Activated naive CD4-positive, alpha-beta T cell treated with anti-CD3 and anti-CD28 coated beads for 36 hours (primary cell): ENCODE measurements at regions of chr22 and their contacts with region 1.

Region 1: GRCh38 chr22:36065775-36066559 is 37.3 kb upstream of the RBFOX2 start:
- DNase-seq: peak; percentile 80
- H3K4me3 Mint-ChIP-seq: peak overlapping the region; percentile 81
- H3K27ac Mint-ChIP-seq: peak overlapping the region; percentile 65
- H3K4me1 Mint-ChIP-seq: peaks cover 9% of the 10 kb centered on the region
- H3K27me3 Mint-ChIP-seq: no peaks in the 10 kb centered on the region

Region 2: DNA sequence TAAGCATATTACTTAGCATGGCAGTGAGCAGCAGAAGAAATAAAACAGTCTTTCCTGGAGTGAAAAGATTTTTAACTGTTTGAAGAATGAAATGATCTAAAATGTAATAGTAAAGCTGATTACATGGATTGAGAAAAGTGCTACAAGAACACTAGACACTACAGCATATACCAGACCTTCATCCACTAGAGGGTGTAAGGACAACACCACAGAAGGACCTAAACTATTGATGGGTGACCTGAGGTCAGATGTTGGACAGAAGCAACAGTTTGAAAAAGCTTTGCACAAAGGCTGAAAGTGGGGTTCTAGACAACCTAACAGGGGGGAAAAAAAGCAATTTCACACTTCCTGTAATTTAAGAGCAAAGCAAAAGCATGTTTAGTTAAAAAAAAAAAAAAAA is 135.0 kb before region 1 on chr22:
- CTCF ChIA-PET with region 1: interaction called, 10 read pairs
- intact Hi-C with region 1: loop called (anchors 1 kb)
- DNase-seq: no peak
- H3K4me3 Mint-ChIP-seq: no peak overlapping the region
- H3K27ac Mint-ChIP-seq: no peak overlapping the region
- H3K4me1 Mint-ChIP-seq: no peaks in the 10 kb centered on the region
- H3K27me3 Mint-ChIP-seq: no peaks in the 10 kb centered on the region

Region 3: DNA sequence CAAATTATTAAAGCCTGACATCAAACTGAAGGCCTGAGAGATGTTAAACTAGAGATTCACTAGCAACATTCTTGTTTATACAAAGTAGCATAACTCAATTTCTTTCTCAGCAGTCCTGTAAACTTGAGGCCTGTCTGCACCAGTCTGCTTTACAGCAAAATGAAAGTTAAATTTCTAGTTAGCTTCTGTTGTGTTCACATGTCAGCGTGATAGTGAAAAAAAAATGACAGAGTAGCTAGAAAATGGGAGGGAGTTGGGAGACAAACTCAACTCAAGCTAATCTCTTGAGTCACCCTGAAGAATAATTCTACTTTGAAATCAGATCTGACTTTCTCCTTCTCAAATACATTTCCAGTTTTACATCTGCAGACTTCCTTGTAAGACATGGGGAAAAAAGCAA is 43.8 kb before region 1 on chr22:
- CTCF ChIA-PET with region 1: interaction called, 31 read pairs
- intact Hi-C with region 1: no loop called
- DNase-seq: no peak
- H3K4me3 Mint-ChIP-seq: no peak overlapping the region
- H3K27ac Mint-ChIP-seq: peak overlapping the region; percentile 10
- H3K4me1 Mint-ChIP-seq: peaks cover 17% of the 10 kb centered on the region
- H3K27me3 Mint-ChIP-seq: no peaks in the 10 kb centered on the region

Region 4: GRCh38 chr22:36052505-36053270 is 13.3 kb before region 1 on chr22:
- CTCF ChIA-PET with region 1: interaction called, 48 read pairs
- intact Hi-C with region 1: no loop called
- DNase-seq: peak; percentile 38
- H3K4me3 Mint-ChIP-seq: no peak overlapping the region
- H3K27ac Mint-ChIP-seq: no peak overlapping the region
- H3K4me1 Mint-ChIP-seq: peaks cover 5% of the 10 kb centered on the region
- H3K27me3 Mint-ChIP-seq: peaks cover 4% of the 10 kb centered on the region

Region 5: GRCh38 chr22:36086170-36086490 is 20.2 kb after region 1 on chr22:
- CTCF ChIA-PET with region 1: interaction called, 15 read pairs
- intact Hi-C with region 1: no loop called
- DNase-seq: no peak
- H3K4me3 Mint-ChIP-seq: no peak overlapping the region
- H3K27ac Mint-ChIP-seq: no peak overlapping the region
- H3K4me1 Mint-ChIP-seq: no peaks in the 10 kb centered on the region
- H3K27me3 Mint-ChIP-seq: no peaks in the 10 kb centered on the region

Region 6: GRCh38 chr22:36123673-36124630 is 58.0 kb after region 1 on chr22:
- CTCF ChIA-PET with region 1: interaction called, 23 read pairs
- intact Hi-C with region 1: loop called (anchors 1 kb)
- DNase-seq: peak; percentile 95
- H3K4me3 Mint-ChIP-seq: peak overlapping the region; percentile 69
- H3K27ac Mint-ChIP-seq: peak overlapping the region; percentile 86
- H3K4me1 Mint-ChIP-seq: peaks cover 14% of the 10 kb centered on the region
- H3K27me3 Mint-ChIP-seq: no peaks in the 10 kb centered on the region

Region 7: DNA sequence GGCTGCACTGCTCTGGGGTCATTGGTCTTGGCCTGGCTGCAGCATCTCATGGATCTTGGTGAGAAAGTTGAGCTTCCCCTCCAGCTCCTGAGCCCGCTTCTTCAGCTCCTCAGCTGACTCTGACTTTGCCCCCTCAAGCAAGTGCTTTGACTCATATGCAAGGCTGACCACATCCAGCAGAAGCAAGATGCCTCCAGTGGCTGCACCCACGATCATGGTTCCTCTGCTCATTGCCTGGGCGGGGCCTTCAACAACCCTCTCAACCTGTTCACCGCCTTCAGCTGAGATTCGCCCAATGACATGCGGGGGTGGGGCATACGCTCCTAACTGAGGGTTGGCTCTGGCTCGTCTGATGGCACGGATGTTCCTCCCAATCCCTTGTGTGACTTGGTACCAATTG is 161.4 kb after region 1 on chr22:
- CTCF ChIA-PET with region 1: no interaction called
- intact Hi-C with region 1: no loop called
- DNase-seq: no peak
- H3K4me3 Mint-ChIP-seq: no peak overlapping the region
- H3K27ac Mint-ChIP-seq: no peak overlapping the region
- H3K4me1 Mint-ChIP-seq: peaks cover 7% of the 10 kb centered on the region
- H3K27me3 Mint-ChIP-seq: no peaks in the 10 kb centered on the region

Region 8: GRCh38 chr22:36352803-36353507 is 287.0 kb after region 1 on chr22:
- CTCF ChIA-PET with region 1: no interaction called
- intact Hi-C with region 1: no loop called
- DNase-seq: peak; percentile 79
- H3K4me3 Mint-ChIP-seq: peak overlapping the region; percentile 19
- H3K27ac Mint-ChIP-seq: peak overlapping the region; percentile 96
- H3K4me1 Mint-ChIP-seq: peaks cover 89% of the 10 kb centered on the region
- H3K27me3 Mint-ChIP-seq: no peaks in the 10 kb centered on the region